ENCODE measurements at regions of chr7 and their contacts with region 1.

Region 1: DNA sequence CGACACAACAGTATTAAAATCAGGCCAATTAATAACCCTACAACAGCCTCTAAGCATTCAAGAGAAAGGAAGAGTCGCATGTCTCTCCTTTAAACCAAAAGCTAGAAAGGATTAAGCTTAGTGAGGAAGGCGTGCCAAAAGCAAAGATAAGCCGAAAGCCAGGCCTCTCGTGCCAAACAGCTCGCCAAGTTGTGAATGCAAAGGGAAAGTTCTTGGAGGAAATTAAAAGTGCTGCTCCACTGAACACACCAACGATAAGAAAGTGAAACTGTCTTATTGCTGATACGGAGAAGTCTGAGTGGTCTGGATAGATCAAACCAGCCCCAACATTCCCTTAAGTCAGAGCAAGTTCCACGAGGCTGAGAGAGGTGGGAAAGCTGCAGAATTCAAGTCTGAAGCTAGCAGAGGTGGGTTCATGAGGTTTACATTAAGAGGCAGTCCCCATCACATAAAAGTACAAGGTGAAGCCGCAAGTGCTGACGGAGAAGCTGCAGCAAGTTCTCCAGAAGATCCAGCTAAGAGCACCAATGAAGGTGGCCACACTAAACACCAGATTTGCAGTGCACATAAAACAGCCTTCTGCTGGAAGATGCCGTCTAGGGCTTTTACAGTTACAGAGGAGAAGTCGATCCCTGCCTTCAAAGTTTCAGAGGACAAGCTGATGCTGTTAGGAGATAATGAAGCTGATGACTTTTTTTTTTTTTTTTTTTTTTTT is 194.8 kb downstream of the MAD1L1 start:
- DNase-seq: peak; percentile 40
- H3K4me3 Mint-ChIP-seq: peak overlapping the region; percentile 74
- H3K27ac Mint-ChIP-seq: peak overlapping the region; percentile 78
- H3K4me1 Mint-ChIP-seq: peaks cover 52% of the 10 kb centered on the region
- H3K27me3 Mint-ChIP-seq: no peaks in the 10 kb centered on the region

Region 2: GRCh38 chr7:2019607-2020511 is 18.1 kb before region 1 on chr7:
- CTCF ChIA-PET with region 1: no interaction called
- intact Hi-C with region 1: loop called (anchors 2 kb)
- DNase-seq: peak; percentile 58
- H3K4me3 Mint-ChIP-seq: peak overlapping the region; percentile 24
- H3K27ac Mint-ChIP-seq: peak overlapping the region; percentile 61
- H3K4me1 Mint-ChIP-seq: peaks cover 28% of the 10 kb centered on the region
- H3K27me3 Mint-ChIP-seq: no peaks in the 10 kb centered on the region

Region 3: DNA sequence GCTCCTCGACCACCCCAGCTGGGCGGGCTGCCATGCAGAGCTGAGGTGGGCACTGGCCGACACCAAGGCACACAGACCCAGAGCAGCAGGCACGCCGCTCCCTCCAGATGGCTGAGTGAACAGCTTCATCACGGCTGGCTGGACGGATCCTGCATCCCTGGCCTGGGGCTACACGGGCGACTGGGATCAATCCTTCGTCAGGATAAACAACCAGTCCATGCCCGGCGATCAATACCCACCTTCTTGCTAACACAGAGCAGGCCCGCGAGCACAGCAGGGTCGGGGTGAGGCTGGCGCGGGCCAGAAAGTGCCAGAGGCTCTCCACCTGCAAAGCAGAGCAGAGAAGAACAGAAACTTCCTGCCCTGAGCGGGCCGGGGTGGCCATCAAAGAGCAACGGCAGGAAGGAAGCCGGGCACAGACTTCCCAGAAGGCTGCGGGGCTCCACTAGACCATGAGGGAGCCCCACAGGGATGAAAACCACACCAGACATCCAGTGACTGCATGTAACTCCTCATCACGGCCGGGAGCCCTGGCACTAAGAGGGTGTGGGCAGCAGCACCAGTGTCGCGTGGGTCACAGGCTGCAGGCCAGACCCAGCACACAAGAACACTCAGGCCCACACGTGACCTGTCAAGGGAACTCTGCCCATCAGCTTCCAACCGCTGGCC is 28.4 kb after region 1 on chr7:
- CTCF ChIA-PET with region 1: interaction called, 3 read pairs
- intact Hi-C with region 1: loop called (anchors 1 kb)
- DNase-seq: peak; percentile 66
- H3K4me3 Mint-ChIP-seq: peak overlapping the region; percentile 48
- H3K27ac Mint-ChIP-seq: peak overlapping the region; percentile 74
- H3K4me1 Mint-ChIP-seq: peaks cover 26% of the 10 kb centered on the region
- H3K27me3 Mint-ChIP-seq: no peaks in the 10 kb centered on the region

Measured in activated naive CD4-positive, alpha-beta T cell treated with anti-CD3 and anti-CD28 coated beads for 36 hours (primary cell).